Activated CD8-positive, alpha-beta T cell treated with anti-CD3 and anti-CD28 coated beads for 36 hours (primary cell): ENCODE measurements at regions of chr14 and their contacts with region 1.

Region 1: DNA sequence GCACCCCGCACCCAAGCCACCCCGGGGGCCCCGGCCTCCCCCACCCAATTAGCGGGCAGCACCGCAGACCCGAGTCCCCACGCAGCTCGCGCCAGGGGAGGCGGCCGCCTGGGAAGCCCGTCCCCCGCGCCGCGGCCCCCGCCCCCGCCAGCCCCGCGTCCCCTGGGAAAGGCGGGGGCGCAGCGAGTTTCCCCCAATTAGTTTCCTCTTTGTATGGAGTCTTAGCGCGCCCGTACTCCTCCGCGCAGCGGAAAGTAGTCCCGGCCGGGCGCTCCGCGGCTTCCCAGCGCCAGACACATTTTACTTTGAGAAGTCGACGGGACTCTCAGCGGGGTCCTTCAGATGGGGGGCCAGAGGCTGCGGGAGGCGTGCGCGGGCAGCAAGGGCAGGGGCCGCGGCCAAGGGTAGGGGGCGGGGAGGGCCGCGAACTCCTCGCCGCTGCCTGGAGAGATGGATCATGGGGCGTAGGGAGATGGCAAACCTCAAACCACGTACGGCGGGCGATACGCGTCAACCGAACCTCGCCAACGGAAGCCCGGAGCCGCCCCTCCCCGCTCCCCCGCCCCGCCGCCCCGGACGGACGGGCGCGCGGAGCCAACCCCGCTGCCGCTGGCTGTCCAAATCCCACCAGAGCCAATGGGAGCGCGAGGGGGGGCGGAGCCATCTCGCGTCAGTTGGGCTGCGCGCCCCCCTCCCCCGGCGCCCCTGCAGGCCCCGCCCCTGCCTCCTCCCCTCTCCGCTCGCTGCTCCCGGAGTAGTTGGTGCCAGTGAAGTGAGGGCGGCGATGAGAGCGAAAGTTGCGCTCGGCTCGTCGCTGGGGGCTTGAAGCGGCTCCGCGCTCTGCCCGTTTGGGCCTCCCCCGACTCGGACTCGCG is at the start of gene RCOR1:
- DNase-seq: peak; percentile 98
- ATAC-seq: peak; percentile 93
- H3K4me3 Mint-ChIP-seq: peak within 1 kb of the TSS; percentile 79
- H3K27ac Mint-ChIP-seq: peak within 1 kb of the TSS; percentile 95
- H3K4me1 Mint-ChIP-seq: peaks cover 29% of the 10 kb centered on the region
- H3K27me3 Mint-ChIP-seq: no peaks in the 10 kb centered on the region
- CTCF ChIP-seq: no peak
- total RNA-seq, gene RCOR1: 16.1 to 16.2 TPM

Region 2: DNA sequence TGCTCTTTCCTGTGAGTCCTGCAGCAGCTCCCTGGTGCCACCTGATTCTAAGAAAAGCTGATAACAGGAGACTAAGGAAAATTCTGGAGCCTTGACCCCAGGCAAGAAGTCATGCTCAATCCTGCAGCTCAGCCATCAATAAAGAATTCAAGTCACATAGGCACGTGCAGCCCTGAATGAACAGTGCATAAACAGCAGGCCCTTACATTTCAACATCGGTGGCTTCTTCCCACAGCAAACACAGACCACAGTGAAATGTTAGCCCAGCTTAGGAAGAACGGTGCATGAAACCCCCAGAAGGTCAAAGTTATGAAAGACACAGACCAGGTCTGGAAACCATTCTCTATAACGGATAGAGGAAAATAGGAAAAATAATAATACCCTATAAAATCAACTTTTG is 239.9 kb before region 1 on chr14:
- CTCF ChIA-PET with region 1: no interaction called
- POLR2A ChIA-PET with region 1: no interaction called
- intact Hi-C with region 1: no loop called
- DNase-seq: no peak
- ATAC-seq: no peak
- H3K4me3 Mint-ChIP-seq: no peak overlapping the region
- H3K27ac Mint-ChIP-seq: no peak overlapping the region
- H3K4me1 Mint-ChIP-seq: peaks cover 9% of the 10 kb centered on the region
- H3K27me3 Mint-ChIP-seq: no peaks in the 10 kb centered on the region
- CTCF ChIP-seq: no peak

Region 3: GRCh38 chr14:102524466-102525218 is 67.5 kb before region 1 on chr14:
- CTCF ChIA-PET with region 1: interaction called, 20 read pairs
- POLR2A ChIA-PET with region 1: interaction called, 7 read pairs
- intact Hi-C with region 1: loop called (anchors 5 kb)
- DNase-seq: peak; percentile 98
- ATAC-seq: peak; percentile 98
- H3K4me3 Mint-ChIP-seq: peak overlapping the region; percentile 79
- H3K27ac Mint-ChIP-seq: peak overlapping the region; percentile 75
- H3K4me1 Mint-ChIP-seq: peaks cover 28% of the 10 kb centered on the region
- H3K27me3 Mint-ChIP-seq: no peaks in the 10 kb centered on the region
- CTCF ChIP-seq: peak; percentile 93

Region 4: GRCh38 chr14:102608064-102608446 is 15.9 kb after region 1 on chr14:
- CTCF ChIA-PET with region 1: interaction called, 41 read pairs
- POLR2A ChIA-PET with region 1: interaction called, 5 read pairs
- intact Hi-C with region 1: no loop called
- DNase-seq: no peak
- ATAC-seq: no peak
- H3K4me3 Mint-ChIP-seq: no peak overlapping the region
- H3K27ac Mint-ChIP-seq: no peak overlapping the region
- H3K4me1 Mint-ChIP-seq: peaks cover 33% of the 10 kb centered on the region
- H3K27me3 Mint-ChIP-seq: no peaks in the 10 kb centered on the region
- CTCF ChIP-seq: no peak

Region 5: DNA sequence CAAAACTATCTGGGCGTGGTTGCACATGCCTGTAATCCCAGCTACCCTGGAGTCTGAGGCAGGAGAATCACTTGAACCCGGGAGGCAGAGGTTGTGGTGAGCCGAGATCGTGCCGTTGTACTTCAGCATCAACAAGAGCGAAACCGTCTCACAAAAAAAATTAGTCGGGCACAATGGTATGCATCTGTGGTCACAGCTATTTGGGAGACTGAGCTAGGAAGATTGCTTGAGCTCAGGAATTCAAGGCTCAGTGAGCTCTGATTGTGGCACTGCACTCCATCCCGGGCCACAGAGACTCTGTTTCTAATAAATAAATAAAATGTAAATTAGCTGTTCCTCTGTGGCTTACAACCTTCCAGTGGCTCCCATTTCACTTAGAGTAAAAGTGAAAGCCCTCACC is 28.3 kb after region 1 on chr14:
- CTCF ChIA-PET with region 1: interaction called, 13 read pairs
- POLR2A ChIA-PET with region 1: no interaction called
- intact Hi-C with region 1: no loop called
- DNase-seq: no peak
- ATAC-seq: no peak
- H3K4me3 Mint-ChIP-seq: no peak overlapping the region
- H3K27ac Mint-ChIP-seq: no peak overlapping the region
- H3K4me1 Mint-ChIP-seq: peaks cover 43% of the 10 kb centered on the region
- H3K27me3 Mint-ChIP-seq: no peaks in the 10 kb centered on the region
- CTCF ChIP-seq: no peak

Region 6: GRCh38 chr14:102629808-102630350 is 37.8 kb after region 1 on chr14:
- CTCF ChIA-PET with region 1: interaction called, 19 read pairs
- POLR2A ChIA-PET with region 1: no interaction called
- intact Hi-C with region 1: no loop called
- DNase-seq: no peak
- ATAC-seq: no peak
- H3K4me3 Mint-ChIP-seq: no peak overlapping the region
- H3K27ac Mint-ChIP-seq: no peak overlapping the region
- H3K4me1 Mint-ChIP-seq: peaks cover 39% of the 10 kb centered on the region
- H3K27me3 Mint-ChIP-seq: no peaks in the 10 kb centered on the region
- CTCF ChIP-seq: no peak